ENCODE measurements at regions of chr7 and their contacts with region 1.

Region 1: DNA sequence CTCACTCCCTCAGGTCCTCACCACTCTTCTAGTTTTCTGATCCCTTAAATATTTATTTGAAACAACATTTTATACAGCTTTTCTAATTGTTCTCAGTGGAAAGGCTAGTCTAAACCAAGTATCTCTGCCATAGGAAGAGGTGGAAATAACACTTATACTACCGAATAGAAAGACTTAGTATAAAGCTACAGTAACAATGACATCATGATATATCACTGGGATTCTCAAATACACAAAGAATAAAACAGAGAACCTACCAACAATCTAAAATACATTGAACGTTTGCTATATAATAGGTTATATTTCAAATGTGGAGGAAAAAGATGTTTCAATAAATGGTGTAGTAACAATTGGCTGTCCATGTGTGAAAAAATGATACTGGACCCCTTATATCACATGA is 142.9 kb downstream of the KMT2C start:
- DNase-seq: no peak
- H3K4me3 ChIP-seq: no peak overlapping the region
- H3K4me3 Mint-ChIP-seq: no peak overlapping the region
- H3K27ac ChIP-seq: no peak overlapping the region
- H3K27ac Mint-ChIP-seq: no peak overlapping the region
- H3K4me1 ChIP-seq: no peaks in the 10 kb centered on the region
- H3K4me1 Mint-ChIP-seq: peaks cover 0 to 7% (median 4%) of the 10 kb centered on the region in 4 donors
- H3K27me3 ChIP-seq: no peaks in the 10 kb centered on the region
- H3K27me3 Mint-ChIP-seq: no peaks in the 10 kb centered on the region

Region 2: DNA sequence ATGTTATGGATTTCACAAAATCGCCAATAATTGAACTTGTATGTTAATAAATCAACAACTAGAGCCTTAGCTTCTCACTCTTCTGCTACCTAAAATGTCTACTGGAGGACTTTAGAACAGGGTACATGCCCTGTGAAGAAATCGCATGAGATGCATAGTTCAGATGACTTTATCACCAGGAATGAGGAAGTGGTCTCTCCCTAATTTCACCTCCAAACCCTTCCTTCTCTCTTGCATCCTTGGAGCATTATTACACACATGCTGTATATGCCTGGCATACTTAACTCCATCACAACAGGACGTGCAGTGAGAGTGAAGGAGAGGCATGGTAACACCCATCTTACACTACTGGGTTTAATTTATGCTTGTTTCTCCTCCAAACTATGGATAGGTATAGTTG is 801.0 kb before region 1 on chr7:
- CTCF ChIA-PET with region 1: no interaction called
- POLR2A ChIA-PET with region 1: no interaction called
- intact Hi-C with region 1: loop called (anchors 10 kb)
- DNase-seq: no peak
- H3K4me3 ChIP-seq: no peak overlapping the region
- H3K4me3 Mint-ChIP-seq: no peak overlapping the region
- H3K27ac ChIP-seq: no peak overlapping the region
- H3K27ac Mint-ChIP-seq: peak overlapping the region in 1 of 7 donors; percentile 22
- H3K4me1 ChIP-seq: peaks cover 28% of the 10 kb centered on the region
- H3K4me1 Mint-ChIP-seq: peaks cover 19 to 44% (median 34%) of the 10 kb centered on the region in 4 donors
- H3K27me3 ChIP-seq: no peaks in the 10 kb centered on the region
- H3K27me3 Mint-ChIP-seq: no peaks in the 10 kb centered on the region